ENCODE measurements at regions of chr1 and their contacts with region 1.

Region 1: DNA sequence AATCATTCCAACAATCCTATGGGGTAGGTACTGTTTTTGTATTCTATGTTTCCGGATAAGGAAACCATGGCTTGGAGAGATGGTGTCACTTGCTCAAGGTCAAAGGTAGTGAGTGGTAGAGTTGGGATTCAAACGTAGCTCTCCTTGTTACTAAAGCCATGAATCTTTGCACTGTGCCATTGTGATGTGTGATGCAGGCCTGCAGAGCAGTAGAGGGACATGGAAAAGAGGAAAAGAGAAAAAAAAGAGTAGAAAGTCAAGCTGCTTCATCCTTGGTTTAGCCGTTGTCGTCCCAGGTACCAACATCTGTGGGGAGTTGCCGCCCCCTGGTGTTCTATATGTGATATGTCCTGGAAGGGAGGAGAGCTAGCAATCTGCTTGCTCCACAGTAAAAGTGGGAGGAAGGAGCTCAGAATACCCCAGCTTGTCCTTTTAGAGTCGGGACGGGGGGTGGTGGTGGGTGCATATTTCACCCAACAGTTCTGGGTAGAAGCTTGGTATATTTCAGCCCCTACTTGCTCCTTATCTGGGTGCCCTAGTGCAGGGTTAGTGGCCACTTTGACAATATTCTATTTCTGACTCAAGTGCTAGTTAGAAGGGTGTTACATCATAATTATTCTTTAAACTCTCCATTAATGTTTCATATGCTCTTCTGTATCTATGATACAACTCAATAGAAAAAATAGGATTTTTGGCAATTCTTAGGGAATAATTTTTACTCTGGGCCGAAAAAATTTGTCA is 98.4 kb downstream of the EBNA1BP2 start:
- DNase-seq: peak; percentile 40
- ATAC-seq: peak; percentile 97
- H3K4me3 ChIP-seq: no peak overlapping the region
- H3K27ac ChIP-seq: no peak overlapping the region
- H3K4me1 ChIP-seq: peaks cover 9% of the 10 kb centered on the region; the same call in 1 of the 2 replicates
- H3K27me3 ChIP-seq: peaks cover 0 to 1% of the 10 kb centered on the region in 2 experiments; a peak in 1 of 4 replicates
- CTCF ChIP-seq: peak; percentile 74 to 90 (median 85)
- EP300 ChIP-seq: no peak
- POLR2A ChIP-seq: no peak
- RAD21 ChIP-seq: peak; percentile 99

Region 2: DNA sequence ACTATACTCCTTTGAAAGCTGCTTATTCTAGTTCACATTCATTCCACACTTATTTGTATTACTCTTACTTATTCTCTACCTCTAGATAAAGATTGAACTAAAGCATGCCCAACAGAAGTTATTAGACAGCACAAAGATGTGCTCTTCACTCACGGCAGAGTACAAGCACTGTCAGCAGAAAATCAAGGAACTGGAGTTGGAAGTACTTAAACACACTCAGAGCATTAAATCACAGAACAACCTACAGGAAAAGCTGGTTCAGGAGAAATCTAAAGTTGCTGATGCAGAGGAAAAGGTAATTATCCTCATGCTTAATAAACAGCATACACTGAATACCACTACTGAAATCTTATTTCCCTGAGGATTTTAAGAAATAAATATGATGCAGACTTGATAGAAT is 496.7 kb before region 1 on chr1:
- CTCF ChIA-PET with region 1: interaction called, 13 read pairs
- POLR2A ChIA-PET with region 1: no interaction called
- RAD21 ChIA-PET with region 1: interaction called, 22 read pairs
- SMC1A ChIA-PET with region 1: interaction called, 9 read pairs
- in situ Hi-C with region 1: no loop called
- intact Hi-C with region 1: loop called (anchors 5 kb)
- DNase-seq: no peak
- ATAC-seq: no peak
- H3K4me3 ChIP-seq: no peak overlapping the region
- H3K27ac ChIP-seq: no peak overlapping the region
- H3K4me1 ChIP-seq: no peaks in the 10 kb centered on the region
- H3K27me3 ChIP-seq: no peaks in the 10 kb centered on the region
- CTCF ChIP-seq: no peak
- EP300 ChIP-seq: no peak
- POLR2A ChIP-seq: no peak
- RAD21 ChIP-seq: no peak

Region 3: DNA sequence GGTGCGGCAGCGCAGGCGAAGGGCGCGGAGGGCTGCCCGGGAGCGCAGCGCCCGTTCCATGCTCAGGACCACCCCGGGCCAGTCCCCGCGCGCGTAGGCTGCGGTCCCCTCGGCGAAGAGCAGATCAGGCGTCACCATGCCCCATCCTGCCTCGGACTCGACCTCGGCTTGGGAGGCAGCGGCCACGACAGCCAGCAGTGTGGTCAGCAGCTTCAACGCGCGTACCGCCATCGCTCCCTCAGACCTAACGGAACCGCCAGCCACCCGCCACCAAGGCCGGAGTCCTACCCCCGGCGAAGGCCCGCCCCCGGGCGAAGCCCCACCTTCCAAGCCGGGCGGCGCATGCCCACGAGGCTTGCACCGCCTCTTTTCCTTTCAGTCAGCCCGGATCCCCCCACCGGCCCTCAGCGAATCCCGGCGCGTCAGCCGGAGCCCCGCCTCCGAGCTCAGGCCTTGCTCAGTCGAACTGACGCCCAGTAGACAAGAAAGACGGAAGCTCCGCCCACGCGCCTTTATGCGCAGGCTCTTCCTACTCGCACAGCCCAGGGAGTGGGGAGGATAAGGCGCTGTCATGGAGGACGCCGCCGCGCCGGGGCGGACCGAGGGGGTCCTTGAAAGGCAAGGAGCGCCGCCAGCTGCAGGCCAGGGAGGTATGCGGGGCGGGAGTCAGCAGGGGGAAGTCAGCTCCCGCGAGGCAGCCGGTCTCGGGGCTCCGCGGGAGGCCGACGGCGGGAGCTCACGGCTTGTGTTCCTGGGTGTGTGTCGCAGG is 306.7 kb before region 1 on chr1 and contains the starts of genes C1orf50 and P3H1:
- CTCF ChIA-PET with region 1: interaction called, 28 read pairs
- POLR2A ChIA-PET with region 1: interaction called, 6 read pairs
- RAD21 ChIA-PET with region 1: interaction called, 14 read pairs
- SMC1A ChIA-PET with region 1: interaction called, 6 read pairs
- in situ Hi-C with region 1: no loop called
- intact Hi-C with region 1: no loop called
- DNase-seq: peak; percentile 93
- ATAC-seq: peak; percentile 93
- H3K4me3 ChIP-seq: peak within 1 kb of the TSS; percentile 95
- H3K27ac ChIP-seq: peak within 1 kb of the TSS; percentile 84
- H3K4me1 ChIP-seq: peaks cover 4% of the 10 kb centered on the region; the same call in 1 of the 2 replicates
- H3K27me3 ChIP-seq: no peaks in the 10 kb centered on the region
- CTCF ChIP-seq: no peak
- EP300 ChIP-seq: no peak
- POLR2A ChIP-seq: peak; percentile 99
- RAD21 ChIP-seq: no peak
- polyA plus RNA-seq, gene C1orf50: 1.2 to 3.3 TPM
- polyA plus RNA-seq, gene P3H1: 0.72 to 3.1 TPM

Region 4: GRCh38 chr1:42846257-42847110 is 227.2 kb before region 1 on chr1 and contains the start of gene ZNF691:
- CTCF ChIA-PET with region 1: interaction called, 4 read pairs
- POLR2A ChIA-PET with region 1: no interaction called
- RAD21 ChIA-PET with region 1: interaction called, 19 read pairs
- SMC1A ChIA-PET with region 1: interaction called, 9 read pairs
- in situ Hi-C with region 1: no loop called
- intact Hi-C with region 1: no loop called
- DNase-seq: peak; percentile 92
- ATAC-seq: peak; percentile 98
- H3K4me3 ChIP-seq: peak within 1 kb of the TSS; percentile 97
- H3K27ac ChIP-seq: peak within 1 kb of the TSS; percentile 78
- H3K4me1 ChIP-seq: no peaks in the 10 kb centered on the region; the same call in 1 of the 2 replicates
- H3K27me3 ChIP-seq: no peaks in the 10 kb centered on the region
- CTCF ChIP-seq: peak; percentile 35 to 45 (median 39)
- EP300 ChIP-seq: no peak
- POLR2A ChIP-seq: peak; percentile 90
- RAD21 ChIP-seq: no peak
- polyA plus RNA-seq, gene ZNF691: 14.9 to 16.2 TPM

Region 5: GRCh38 chr1:42931108-42931539 is 142.5 kb before region 1 on chr1:
- CTCF ChIA-PET with region 1: interaction called, 247 read pairs
- POLR2A ChIA-PET with region 1: interaction called, 3 read pairs
- RAD21 ChIA-PET with region 1: interaction called, 9 read pairs
- SMC1A ChIA-PET with region 1: interaction called, 602 read pairs
- in situ Hi-C with region 1: no loop called
- intact Hi-C with region 1: no loop called
- DNase-seq: peak; percentile 69
- ATAC-seq: peak; percentile 61
- H3K4me3 ChIP-seq: 0 out of 2 replicates have a peak overlapping the region, but pooled peaks have one; percentile 17
- H3K27ac ChIP-seq: peak overlapping the region; percentile 95
- H3K4me1 ChIP-seq: peaks cover 63% of the 10 kb centered on the region
- H3K27me3 ChIP-seq: no peaks in the 10 kb centered on the region
- CTCF ChIP-seq: peak; percentile 53 to 65 (median 65)
- EP300 ChIP-seq: peak in 1 of 2 experiments; percentile 36; a peak in 1 of 4 replicates
- POLR2A ChIP-seq: no peak
- RAD21 ChIP-seq: peak; percentile 60

Region 6: DNA sequence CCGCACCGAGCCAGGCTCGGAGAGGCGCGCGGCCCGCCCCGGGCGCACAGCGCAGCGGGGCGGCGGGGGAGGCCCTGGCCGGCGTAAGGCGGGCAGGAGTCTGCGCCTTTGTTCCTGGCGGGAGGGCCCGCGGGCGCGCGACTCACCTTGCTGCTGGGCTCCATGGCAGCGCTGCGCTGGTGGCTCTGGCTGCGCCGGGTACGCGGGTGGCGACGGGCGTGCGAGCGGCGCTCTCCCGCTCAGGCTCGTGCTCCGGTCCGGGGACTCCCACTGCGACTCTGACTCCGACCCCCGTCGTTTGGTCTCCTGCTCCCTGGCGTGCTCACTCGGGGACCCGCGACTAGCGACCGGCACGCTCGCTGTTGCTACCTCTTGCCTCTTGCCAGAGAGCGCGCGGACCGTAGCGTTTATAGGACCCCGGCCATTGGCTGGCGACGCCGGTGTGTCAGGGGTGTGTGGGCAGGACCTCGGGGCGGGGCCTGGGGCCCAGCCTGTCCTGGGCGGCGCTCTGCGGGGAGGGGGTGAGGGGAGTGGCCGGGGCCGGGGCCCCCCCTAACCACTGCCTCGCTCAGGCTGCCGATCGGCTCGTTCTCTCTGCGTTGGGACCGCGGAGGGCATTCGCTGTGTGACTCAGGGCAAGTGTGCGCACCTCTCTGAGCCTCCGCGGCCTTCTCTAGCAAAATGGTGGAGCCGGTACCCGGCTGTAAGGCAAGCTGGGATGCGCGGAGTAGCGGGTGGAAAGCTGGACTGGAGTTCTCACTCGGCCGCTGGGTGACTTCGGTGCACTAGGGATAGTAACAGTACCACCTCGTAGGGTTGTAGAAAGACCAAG is 115.0 kb before region 1 on chr1 and contains the start of gene SLC2A1:
- CTCF ChIA-PET with region 1: interaction called, 17 read pairs
- POLR2A ChIA-PET with region 1: no interaction called
- RAD21 ChIA-PET with region 1: interaction called, 6 read pairs
- SMC1A ChIA-PET with region 1: interaction called, 44 read pairs
- in situ Hi-C with region 1: no loop called
- intact Hi-C with region 1: no loop called
- DNase-seq: peak; percentile 79
- ATAC-seq: peak; percentile 88
- H3K4me3 ChIP-seq: peak within 1 kb of the TSS; percentile 88
- H3K27ac ChIP-seq: peak within 1 kb of the TSS; percentile 78
- H3K4me1 ChIP-seq: peaks cover 38% of the 10 kb centered on the region
- H3K27me3 ChIP-seq: no peaks in the 10 kb centered on the region
- CTCF ChIP-seq: no peak; a peak in 1 of 6 replicates
- EP300 ChIP-seq: peak in 1 of 2 experiments; percentile 14; a peak in 1 of 4 replicates
- POLR2A ChIP-seq: peak; percentile 100
- RAD21 ChIP-seq: no peak
- polyA plus RNA-seq, gene SLC2A1: 5.7 to 8.2 TPM

Measured in GM12878 (cell line).